AG04450 (cell line): ENCODE measurements at regions of chr2 and their contacts with region 1.

Region 1: GRCh38 chr2:6939071-6939470 is 21.9 kb downstream of the RNF144A start:
- DNase-seq: no peak
- H3K4me3 ChIP-seq: no peak overlapping the region
- H3K27ac ChIP-seq: no peak overlapping the region
- H3K27me3 ChIP-seq: no peaks in the 10 kb centered on the region
- CTCF ChIP-seq: no peak

Region 2: GRCh38 chr2:7068457-7068856 is 129.4 kb after region 1 on chr2:
- CTCF ChIA-PET with region 1: interaction called, 13 read pairs
- POLR2A ChIA-PET with region 1: no interaction called
- DNase-seq: no peak
- H3K4me3 ChIP-seq: no peak overlapping the region
- H3K27ac ChIP-seq: no peak overlapping the region
- H3K27me3 ChIP-seq: no peaks in the 10 kb centered on the region
- CTCF ChIP-seq: no peak